Gastrocnemius medialis (tissue), 4 donors: ENCODE measurements at regions of chr9 and their contacts with region 1.

Region 1: GRCh38 chr9:35367451-35367850 is 122.5 kb upstream of the RUSC2 start:
- DNase-seq: peak; percentile 46 to 65
- ATAC-seq: peak; percentile 96 to 97
- H3K4me3 ChIP-seq: no peak overlapping the region
- H3K27ac ChIP-seq: peak overlapping the region; percentile 81 to 86 (median 82)
- H3K4me1 ChIP-seq: peaks cover 45 to 55% of the 10 kb centered on the region in 2 donors
- H3K27me3 ChIP-seq: no peaks in the 10 kb centered on the region
- CTCF ChIP-seq: no peak
- POLR2A ChIP-seq: peak in 1 of 2 donors; percentile 27

Region 2: GRCh38 chr9:34948451-34948850 is 419.0 kb before region 1 on chr9:
- in situ Hi-C with region 1: no loop called
- intact Hi-C with region 1: no loop called
- DNase-seq: no peak
- ATAC-seq: no peak
- H3K4me3 ChIP-seq: no peak overlapping the region
- H3K27ac ChIP-seq: no peak overlapping the region
- H3K4me1 ChIP-seq: no peaks in the 10 kb centered on the region
- H3K27me3 ChIP-seq: peaks cover 0 to 10% (median 2%) of the 10 kb centered on the region in 3 donors
- CTCF ChIP-seq: no peak
- POLR2A ChIP-seq: no peak

Region 3: GRCh38 chr9:35277628-35278359 is 89.7 kb before region 1 on chr9:
- in situ Hi-C with region 1: no loop called
- intact Hi-C with region 1: loop called (anchors 5 kb)
- DNase-seq: peak in 1 of 2 donors; percentile 15
- ATAC-seq: peak; percentile 92 to 98
- H3K4me3 ChIP-seq: no peak overlapping the region
- H3K27ac ChIP-seq: peak overlapping the region; percentile 68 to 78 (median 70)
- H3K4me1 ChIP-seq: peaks cover 41 to 49% of the 10 kb centered on the region in 2 donors
- H3K27me3 ChIP-seq: no peaks in the 10 kb centered on the region
- CTCF ChIP-seq: no peak
- POLR2A ChIP-seq: no peak